OCI-LY7 (cell line): ENCODE measurements at regions of chr15 and their contacts with region 1.

Region 1: DNA sequence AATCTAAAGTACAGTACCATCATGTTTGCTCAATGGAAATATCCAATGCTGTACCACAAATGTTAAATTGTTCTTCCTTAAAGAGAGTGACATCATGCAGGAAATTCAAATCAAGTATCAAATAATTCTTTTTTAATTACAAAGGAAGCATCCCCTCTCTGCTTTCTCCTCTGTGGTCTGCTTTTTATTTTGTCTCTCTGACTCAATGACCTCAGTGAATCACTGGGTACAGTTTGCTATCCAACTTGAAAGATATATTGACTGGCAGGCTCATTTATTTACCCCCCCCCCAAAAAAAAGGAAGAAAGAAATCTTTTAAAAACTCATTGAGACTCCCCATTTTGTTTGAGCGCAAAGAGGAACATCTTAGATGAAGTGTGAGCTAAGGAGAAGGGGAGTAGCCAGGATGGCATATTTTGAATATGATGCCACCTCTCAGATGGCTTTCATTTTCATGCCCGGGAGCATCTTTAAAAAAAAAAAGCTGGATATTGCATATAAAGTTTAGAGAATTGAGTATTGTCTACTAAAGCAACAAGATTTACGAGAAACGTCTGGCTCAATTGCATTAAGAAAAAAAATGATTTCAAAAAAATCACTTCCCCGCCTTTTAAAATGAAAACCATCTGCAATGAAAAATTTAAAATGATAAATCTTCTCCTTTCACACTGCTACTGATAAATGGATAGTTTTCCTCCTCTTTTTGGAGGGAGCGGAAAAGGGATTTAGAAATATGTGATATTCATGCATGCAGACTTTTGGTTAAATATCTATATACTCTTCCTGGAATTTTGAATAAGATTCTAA is 307.1 kb upstream of the DPH6 start:
- DNase-seq: no peak
- H3K4me3 ChIP-seq: no peak overlapping the region
- H3K27ac ChIP-seq: no peak overlapping the region
- H3K4me1 ChIP-seq: no peaks in the 10 kb centered on the region
- CTCF ChIP-seq: no peak

Region 2: DNA sequence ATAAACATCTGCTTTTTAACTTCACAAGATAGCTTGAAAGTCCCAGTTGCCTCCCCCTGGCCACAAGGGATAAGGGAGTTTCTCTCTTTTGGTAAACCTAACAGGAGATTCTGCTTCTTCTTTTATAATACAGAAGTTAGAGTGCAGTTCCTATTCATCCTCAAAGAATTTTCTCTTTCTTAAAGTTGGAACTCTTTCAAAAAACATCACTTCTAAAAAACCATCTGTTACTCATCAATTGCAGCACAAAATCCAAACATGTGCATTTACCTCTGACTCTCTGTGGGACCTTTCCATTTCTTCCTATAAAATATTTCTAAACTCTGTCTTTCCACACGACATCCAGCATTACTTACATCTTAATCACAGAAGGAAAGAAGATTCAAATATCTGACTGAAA is 312.1 kb before region 1 on chr15:
- CTCF ChIA-PET with region 1: no interaction called
- POLR2A ChIA-PET with region 1: interaction called, 11 read pairs
- intact Hi-C with region 1: no loop called
- DNase-seq: no peak
- H3K4me3 ChIP-seq: no peak overlapping the region
- H3K27ac ChIP-seq: no peak overlapping the region
- H3K4me1 ChIP-seq: peaks cover 5% of the 10 kb centered on the region
- CTCF ChIP-seq: no peak

Region 3: GRCh38 chr15:35753486-35753885 is 99.5 kb before region 1 on chr15:
- CTCF ChIA-PET with region 1: no interaction called
- POLR2A ChIA-PET with region 1: no interaction called
- intact Hi-C with region 1: no loop called
- DNase-seq: no peak
- H3K4me3 ChIP-seq: no peak overlapping the region
- H3K27ac ChIP-seq: no peak overlapping the region
- H3K4me1 ChIP-seq: no peaks in the 10 kb centered on the region
- CTCF ChIP-seq: no peak

Region 4: DNA sequence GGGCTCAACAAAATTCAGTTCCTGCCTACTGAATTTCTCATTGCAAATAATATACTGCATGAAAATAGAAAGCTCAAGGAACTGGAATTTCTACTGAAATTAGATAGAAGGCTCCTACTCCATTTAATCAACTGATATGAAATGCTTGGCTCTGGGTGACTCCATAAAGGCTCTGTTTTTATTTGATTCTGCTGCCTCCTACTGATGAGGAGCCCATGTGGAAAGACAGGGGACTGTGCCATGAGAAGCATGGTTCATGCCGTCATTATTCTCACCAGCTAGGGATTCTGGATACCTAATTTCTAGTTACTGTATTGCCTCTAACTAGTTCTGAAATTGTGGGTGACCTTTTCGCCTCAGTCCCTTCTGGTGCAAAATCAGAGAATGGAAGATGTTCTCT is 59.2 kb after region 1 on chr15:
- CTCF ChIA-PET with region 1: no interaction called
- POLR2A ChIA-PET with region 1: interaction called, 11 read pairs
- intact Hi-C with region 1: no loop called
- DNase-seq: no peak
- H3K4me3 ChIP-seq: no peak overlapping the region
- H3K27ac ChIP-seq: no peak overlapping the region
- H3K4me1 ChIP-seq: no peaks in the 10 kb centered on the region
- CTCF ChIP-seq: no peak